Posterior cingulate gyrus (tissue), 11 donors: ENCODE measurements at regions of chr13 and their contacts with region 1.

Region 1: DNA sequence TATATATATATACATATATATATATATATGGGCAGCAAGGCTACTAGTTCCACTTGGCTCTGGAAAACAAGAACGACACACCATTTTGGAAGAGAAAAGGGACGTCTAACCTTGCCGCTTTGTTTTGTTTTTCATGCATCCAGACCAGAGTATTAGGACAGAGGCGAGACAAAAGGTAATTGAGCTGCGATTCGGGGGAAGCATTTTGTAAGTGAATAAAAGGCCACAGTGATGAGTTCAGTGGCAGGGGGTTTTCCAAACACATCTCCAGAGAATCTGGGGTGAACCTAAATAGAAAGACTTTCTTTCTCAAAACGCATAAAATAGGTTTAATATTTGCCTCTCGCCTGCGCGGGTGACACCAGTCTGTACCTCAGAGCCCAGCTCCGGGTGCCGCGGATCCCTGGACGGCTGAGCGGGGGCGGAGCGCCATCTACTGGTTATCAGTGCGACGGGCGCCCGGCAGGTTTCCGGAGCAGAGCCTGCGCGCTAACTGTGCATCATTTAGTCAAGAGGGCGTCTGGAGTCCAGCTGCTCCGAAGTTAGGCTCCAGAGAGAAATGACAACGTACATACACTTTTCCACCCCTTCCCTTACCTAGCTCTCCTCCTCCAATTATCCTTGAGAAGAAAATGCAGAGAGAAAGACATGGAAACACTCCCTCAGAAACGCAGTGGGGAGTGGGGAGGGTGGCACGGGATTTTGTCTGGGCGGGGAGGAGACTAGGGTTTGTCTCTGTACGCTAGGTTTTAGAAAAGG is 262.3 kb downstream of the TBC1D4 start:
- DNase-seq: peak; percentile 74 to 98 (median 90)

Region 2: GRCh38 chr13:73754727-73755292 is 1464.8 kb before region 1 on chr13:
- intact Hi-C with region 1: loop called (anchors 1 kb)
- DNase-seq: no peak

Region 3: GRCh38 chr13:73835138-73835721 is 1384.4 kb before region 1 on chr13:
- intact Hi-C with region 1: loop called (anchors 2 kb)
- DNase-seq: no peak

Region 4: DNA sequence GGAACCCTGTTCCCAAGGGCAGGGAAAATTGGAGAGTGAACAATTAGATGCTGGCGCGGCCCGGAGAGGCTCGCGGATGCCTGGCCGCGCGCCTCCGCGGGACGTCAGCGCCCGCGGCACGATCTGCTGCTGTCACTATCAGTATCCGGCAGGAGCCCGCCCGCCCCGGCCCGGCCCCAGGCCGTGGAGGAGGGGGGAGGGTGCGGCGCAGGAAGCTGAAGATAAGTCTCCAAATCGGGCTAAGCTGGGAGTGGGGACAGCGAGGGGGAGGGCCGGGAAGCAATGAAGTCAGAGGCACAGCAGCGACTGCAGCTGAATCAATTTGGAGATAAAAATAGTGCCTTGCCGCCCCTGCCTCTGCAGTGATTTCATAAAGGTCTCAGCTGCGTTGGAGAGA is 643.9 kb before region 1 on chr13:
- intact Hi-C with region 1: loop called (anchors 10 kb)
- DNase-seq: peak; percentile 51 to 96 (median 76)

Region 5: GRCh38 chr13:75329747-75330122 is 110.1 kb after region 1 on chr13:
- intact Hi-C with region 1: no loop called
- DNase-seq: no peak